ENCODE measurements at regions of chr7 and their contacts with region 1.

Region 1: DNA sequence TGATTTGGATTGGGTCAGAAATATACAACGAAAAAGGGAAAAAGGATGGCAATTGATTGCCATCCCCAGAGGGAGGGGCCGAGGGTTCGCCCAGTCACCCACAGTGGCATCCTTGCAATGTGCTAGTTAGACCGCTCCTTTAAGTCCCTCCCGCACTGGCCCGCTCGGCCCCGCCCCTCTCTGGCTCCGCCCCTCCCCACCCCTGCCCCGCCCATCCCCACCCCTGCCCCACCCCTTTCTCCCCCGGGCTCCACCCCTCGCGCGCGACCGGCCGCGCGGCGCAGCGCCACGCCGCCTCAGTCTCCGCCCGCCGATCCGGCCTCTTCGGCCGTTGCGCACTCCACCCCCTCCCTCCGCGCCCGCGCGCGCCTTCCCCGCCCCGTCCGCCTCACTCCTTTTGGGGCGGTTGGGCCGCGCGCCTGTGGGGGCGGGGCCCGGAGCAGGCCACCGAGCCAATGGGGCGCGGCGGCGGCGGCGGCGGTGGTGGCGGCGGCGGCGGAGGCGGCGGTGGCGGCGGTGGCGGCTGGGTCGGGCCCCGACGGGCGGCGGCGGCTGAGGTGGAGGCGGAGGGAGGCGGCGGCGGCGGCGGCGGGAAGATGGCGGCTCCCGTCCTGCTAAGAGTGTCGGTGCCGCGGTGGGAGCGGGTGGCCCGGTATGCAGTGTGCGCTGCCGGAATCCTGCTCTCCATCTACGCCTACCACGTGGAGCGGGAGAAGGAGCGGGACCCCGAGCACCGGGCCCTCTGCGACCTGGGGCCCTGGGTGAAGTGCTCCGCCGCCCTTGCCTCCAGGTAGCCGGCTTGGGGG is at the start of gene VKORC1L1:
- DNase-seq: peak; percentile 91
- H3K4me3 ChIP-seq: peak within 1 kb of the TSS; percentile 72 to 88 (median 74)
- H3K27ac ChIP-seq: peak within 1 kb of the TSS; percentile 39
- H3K4me1 ChIP-seq: no peaks in the 10 kb centered on the region
- H3K27me3 ChIP-seq: no peaks in the 10 kb centered on the region
- CTCF ChIP-seq: no peak
- total RNA-seq, gene VKORC1L1: 15.3 to 22.1 TPM

Region 2: DNA sequence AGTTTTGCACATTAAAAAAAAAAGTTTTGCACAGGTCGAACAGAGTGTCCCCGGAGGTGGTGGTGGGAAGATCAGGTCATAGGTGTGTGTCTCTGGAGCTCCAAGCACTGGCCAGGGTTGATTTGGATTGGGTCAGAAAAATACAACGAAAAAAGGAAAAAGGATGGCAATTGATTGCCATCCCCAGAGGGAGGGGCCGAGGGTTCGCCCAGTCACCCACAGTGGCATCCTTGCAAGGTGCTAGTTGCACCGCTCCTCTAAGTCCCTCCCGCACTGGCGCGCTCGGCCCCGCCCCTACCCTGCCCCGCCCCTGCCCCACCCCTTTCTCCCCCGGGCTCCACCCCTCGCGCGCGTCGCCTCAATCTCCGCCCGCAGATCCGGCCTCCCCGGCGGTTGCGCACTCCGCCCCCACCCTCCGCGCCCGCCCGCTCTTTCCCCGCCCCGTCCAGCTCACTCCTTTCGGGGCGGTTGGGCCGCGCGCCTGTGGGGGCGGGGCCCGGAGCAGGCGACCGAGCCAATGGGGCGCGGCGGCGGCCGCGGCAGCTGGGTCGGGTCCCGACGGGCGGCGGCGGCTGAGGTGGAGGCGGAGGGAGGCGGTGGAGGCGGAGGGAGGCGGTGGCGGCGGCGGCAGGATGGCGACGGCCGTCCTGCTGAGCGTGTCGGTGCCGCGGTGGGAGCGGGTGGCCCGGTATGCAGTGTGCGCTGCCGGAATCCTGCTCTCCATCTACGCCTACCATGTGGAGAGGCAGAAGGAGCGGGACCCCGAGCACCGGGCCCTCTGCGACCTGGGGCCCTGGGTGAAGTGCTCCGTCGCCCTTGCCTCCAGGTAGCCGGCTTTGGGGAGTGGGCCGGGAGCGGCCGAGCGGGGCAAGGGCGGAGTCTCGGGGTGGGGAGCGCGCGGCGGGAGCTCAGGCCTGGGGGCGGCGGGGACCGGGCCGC is 835.0 kb before region 1 on chr7:
- CTCF ChIA-PET with region 1: no interaction called
- dilution Hi-C with region 1: no loop called
- in situ Hi-C with region 1: no loop called
- intact Hi-C with region 1: loop called (anchors 10 kb)
- DNase-seq: peak; percentile 92
- H3K4me3 ChIP-seq: peak overlapping the region; percentile 58 to 74 (median 72)
- H3K27ac ChIP-seq: no peak overlapping the region
- H3K4me1 ChIP-seq: peaks cover 3% of the 10 kb centered on the region
- H3K27me3 ChIP-seq: no peaks in the 10 kb centered on the region
- CTCF ChIP-seq: no peak

Region 3: GRCh38 chr7:65981965-65982792 is 109.2 kb after region 1 on chr7 and contains the start of gene GUSB:
- CTCF ChIA-PET with region 1: no interaction called
- dilution Hi-C with region 1: no loop called
- in situ Hi-C with region 1: no loop called
- intact Hi-C with region 1: no loop called
- DNase-seq: peak; percentile 81
- H3K4me3 ChIP-seq: peak within 1 kb of the TSS; percentile 74 to 97 (median 86)
- H3K27ac ChIP-seq: peak within 1 kb of the TSS; percentile 47
- H3K4me1 ChIP-seq: peaks cover 6% of the 10 kb centered on the region
- H3K27me3 ChIP-seq: no peaks in the 10 kb centered on the region
- CTCF ChIP-seq: no peak
- total RNA-seq, gene GUSB: 13.3 to 22.4 TPM

Region 4: DNA sequence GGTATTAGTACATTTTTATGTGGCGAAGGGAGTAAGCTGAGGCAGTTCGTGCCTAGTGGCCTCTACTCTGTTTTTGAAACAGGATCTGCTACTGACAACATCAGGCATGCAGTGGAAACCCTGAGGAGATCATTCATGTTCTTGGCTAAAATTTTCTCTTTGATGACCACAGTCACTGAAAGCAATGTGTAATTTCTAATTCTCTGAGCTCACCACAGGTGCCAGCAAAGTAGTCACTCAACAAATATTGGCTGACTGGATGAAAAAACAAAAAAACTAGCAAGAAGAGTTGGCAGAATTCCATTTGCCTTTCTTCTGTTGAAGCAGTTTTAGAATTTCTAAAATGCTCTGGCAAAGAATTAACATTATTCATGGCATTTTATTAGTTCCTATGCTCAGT is 579.2 kb after region 1 on chr7:
- CTCF ChIA-PET with region 1: no interaction called
- dilution Hi-C with region 1: no loop called
- in situ Hi-C with region 1: no loop called
- intact Hi-C with region 1: no loop called
- DNase-seq: no peak
- H3K4me3 ChIP-seq: no peak overlapping the region
- H3K27ac ChIP-seq: no peak overlapping the region
- H3K4me1 ChIP-seq: no peaks in the 10 kb centered on the region
- H3K27me3 ChIP-seq: no peaks in the 10 kb centered on the region
- CTCF ChIP-seq: no peak